ENCODE measurements at regions of chr6 and their contacts with region 1.

Region 1: DNA sequence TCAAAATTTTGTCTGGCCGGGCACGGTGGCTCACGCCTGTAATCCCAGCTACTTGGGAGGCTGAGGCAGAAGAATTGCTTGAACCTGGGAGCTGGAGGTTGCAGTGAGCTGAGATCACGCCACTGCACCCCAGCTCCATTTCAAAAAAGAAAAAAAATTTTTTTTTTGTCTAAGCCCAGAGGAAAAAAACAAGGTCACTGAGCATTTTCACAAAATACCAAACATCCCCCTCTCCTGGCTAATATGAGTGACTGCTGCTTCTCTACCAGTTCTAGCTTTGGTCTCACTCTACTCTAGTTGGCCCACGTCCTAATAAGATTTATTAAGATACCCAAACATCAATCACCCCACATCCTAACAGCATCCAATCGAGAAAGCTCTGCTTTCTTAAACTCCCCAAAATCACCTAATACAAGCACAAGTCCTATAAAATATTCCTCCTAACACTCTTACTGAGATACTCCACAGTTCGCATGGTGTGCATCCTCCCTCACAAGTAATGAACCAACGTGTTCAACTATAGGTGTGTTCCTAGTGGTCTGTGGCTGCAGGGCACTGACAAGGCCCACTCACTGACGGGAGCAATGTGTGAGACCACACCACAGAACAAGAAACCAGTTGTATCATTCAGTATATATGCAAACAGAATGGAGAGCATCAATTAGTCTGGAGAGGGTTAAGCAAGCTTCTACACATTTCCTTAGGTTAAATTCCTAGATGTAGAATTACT is 64.2 kb downstream of the FKBP5 start:
- DNase-seq: peak; percentile 42
- H3K4me3 ChIP-seq: no peak overlapping the region
- H3K27ac ChIP-seq: no peak overlapping the region
- H3K4me1 ChIP-seq: no peaks in the 10 kb centered on the region
- H3K27me3 ChIP-seq: no peaks in the 10 kb centered on the region
- CTCF ChIP-seq: peak; percentile 23 to 41
- POLR2A ChIP-seq: no peak

Region 2: GRCh38 chr6:35522660-35523658 is 101.5 kb before region 1 on chr6:
- CTCF ChIA-PET with region 1: interaction called, 5 read pairs
- POLR2A ChIA-PET with region 1: no interaction called
- dilution Hi-C with region 1: no loop called
- intact Hi-C with region 1: loop called (anchors 10 kb)
- DNase-seq: peak; percentile 72
- H3K4me3 ChIP-seq: peak overlapping the region in 2 of 3 experiments; percentile 33 to 46
- H3K27ac ChIP-seq: no peak overlapping the region
- H3K4me1 ChIP-seq: no peaks in the 10 kb centered on the region
- H3K27me3 ChIP-seq: no peaks in the 10 kb centered on the region
- CTCF ChIP-seq: peak; percentile 80 to 93
- POLR2A ChIP-seq: no peak

Region 3: GRCh38 chr6:35601331-35602132 is 23.0 kb before region 1 on chr6:
- CTCF ChIA-PET with region 1: interaction called, 12 read pairs
- POLR2A ChIA-PET with region 1: no interaction called
- dilution Hi-C with region 1: no loop called
- intact Hi-C with region 1: no loop called
- DNase-seq: peak; percentile 88
- H3K4me3 ChIP-seq: peak overlapping the region in 1 of 3 experiments; percentile 21
- H3K27ac ChIP-seq: peak overlapping the region; percentile 96
- H3K4me1 ChIP-seq: peaks cover 72% of the 10 kb centered on the region
- H3K27me3 ChIP-seq: no peaks in the 10 kb centered on the region
- CTCF ChIP-seq: no peak
- POLR2A ChIP-seq: no peak

Region 4: DNA sequence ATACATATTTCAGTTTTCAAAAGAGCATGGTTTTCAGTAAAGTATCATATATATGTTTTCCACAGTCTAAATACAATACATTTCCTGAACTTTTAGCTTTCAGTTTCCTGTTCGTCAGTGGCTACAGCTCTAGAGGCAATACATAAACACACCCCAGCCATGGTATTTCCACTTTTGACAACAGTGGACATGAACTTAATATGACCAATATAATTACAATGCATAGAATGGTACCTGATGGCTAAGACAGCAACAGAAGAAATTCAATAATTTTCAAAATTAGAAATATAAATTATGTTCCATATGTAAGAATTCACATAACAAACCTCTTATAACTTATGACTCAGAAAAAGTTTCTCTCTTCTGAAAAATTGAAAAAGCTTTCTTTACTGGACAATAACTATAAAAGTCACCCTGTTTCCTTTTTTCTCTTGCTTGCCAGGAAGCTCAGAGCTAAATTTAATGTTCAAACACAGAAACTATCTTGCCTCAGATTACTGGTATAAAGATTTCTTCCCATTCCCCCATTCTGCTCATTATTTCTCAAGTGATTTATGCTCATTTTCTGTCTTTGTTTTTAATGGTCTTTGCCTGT is 45.0 kb after region 1 on chr6:
- CTCF ChIA-PET with region 1: interaction called, 11 read pairs
- POLR2A ChIA-PET with region 1: no interaction called
- dilution Hi-C with region 1: no loop called
- intact Hi-C with region 1: no loop called
- DNase-seq: peak; percentile 94
- H3K4me3 ChIP-seq: peak overlapping the region in 2 of 3 experiments; percentile 2 to 59
- H3K27ac ChIP-seq: peak overlapping the region; percentile 95
- H3K4me1 ChIP-seq: peaks cover 51% of the 10 kb centered on the region
- H3K27me3 ChIP-seq: no peaks in the 10 kb centered on the region
- CTCF ChIP-seq: no peak
- POLR2A ChIP-seq: no peak

Region 5: DNA sequence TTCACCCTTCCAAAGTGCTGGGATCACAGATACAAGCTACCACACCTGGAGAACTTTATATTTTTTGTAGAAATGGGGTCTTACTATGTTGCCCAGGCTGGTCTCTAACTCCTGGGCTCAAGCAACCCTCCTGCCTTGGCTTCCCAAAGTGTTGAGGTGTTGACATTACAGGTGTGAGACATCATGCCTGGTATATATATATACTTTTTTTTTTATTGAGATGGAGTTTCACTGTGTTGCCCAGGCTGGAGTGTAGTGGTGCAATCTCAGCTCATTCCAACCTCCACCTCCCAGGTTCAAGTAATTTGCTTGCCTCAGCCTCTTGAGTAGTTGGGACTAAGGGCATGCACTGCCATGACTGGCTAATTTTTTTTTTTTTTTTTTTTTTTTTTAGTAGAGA is 58.8 kb after region 1 on chr6:
- CTCF ChIA-PET with region 1: interaction called, 15 read pairs
- POLR2A ChIA-PET with region 1: no interaction called
- dilution Hi-C with region 1: no loop called
- intact Hi-C with region 1: loop called (anchors 5 kb)
- DNase-seq: no peak
- H3K4me3 ChIP-seq: no peak overlapping the region
- H3K27ac ChIP-seq: no peak overlapping the region
- H3K4me1 ChIP-seq: peaks cover 19% of the 10 kb centered on the region
- H3K27me3 ChIP-seq: no peaks in the 10 kb centered on the region
- CTCF ChIP-seq: no peak
- POLR2A ChIP-seq: no peak

Region 6: GRCh38 chr6:35719830-35720733 is 95.6 kb after region 1 on chr6:
- CTCF ChIA-PET with region 1: no interaction called
- POLR2A ChIA-PET with region 1: no interaction called
- dilution Hi-C with region 1: no loop called
- intact Hi-C with region 1: no loop called
- DNase-seq: peak; percentile 62
- H3K4me3 ChIP-seq: peak overlapping the region in 1 of 3 experiments; percentile 27
- H3K27ac ChIP-seq: peak overlapping the region; percentile 57
- H3K4me1 ChIP-seq: peaks cover 31% of the 10 kb centered on the region
- H3K27me3 ChIP-seq: no peaks in the 10 kb centered on the region
- CTCF ChIP-seq: no peak
- POLR2A ChIP-seq: peak; percentile 43

Measured in endothelial cell of umbilical vein (primary cell).